HEK293T (cell line): ENCODE measurements at regions of chr17 and their contacts with region 1.

Region 1: GRCh38 chr17:68457539-68458259 is 403 bp upstream of the WIPI1 start:
- DNase-seq: peak; percentile 99

Region 2: DNA sequence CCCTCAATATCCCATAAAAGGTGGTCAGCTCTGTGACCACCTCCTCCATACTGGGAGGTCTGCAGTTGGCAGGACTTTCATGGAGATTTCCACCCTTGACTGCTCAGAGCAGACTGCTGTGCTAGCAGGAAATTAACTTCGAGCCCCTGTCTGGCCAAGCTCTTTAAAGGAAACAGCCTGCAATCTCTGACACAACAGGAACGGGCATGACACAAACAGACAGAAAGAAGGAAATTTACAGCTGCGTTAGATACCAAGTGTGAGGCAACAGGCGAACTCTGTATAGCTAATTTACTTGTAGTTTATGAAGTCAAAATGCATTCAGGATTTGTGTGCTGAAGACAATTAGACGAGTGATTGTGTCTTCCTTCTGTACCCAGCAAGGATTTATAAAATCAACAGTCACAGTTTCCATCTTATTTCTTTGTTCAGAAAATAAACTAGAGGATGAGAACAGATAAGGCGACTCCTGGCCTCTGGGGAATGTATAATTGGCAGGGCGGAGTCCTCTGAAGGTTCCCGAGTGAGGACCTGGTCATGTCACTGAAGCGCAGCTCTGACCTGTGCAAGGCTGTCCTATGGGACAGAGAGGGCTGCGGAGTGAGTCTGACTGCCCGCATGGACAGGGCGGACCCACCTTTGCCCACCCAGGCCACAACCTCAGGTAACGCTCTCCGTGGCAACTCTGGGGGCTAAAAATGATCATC is 16.5 kb before region 1 on chr17:
- CTCF ChIA-PET with region 1: interaction called, 4 read pairs
- POLR2A ChIA-PET with region 1: interaction called, 10 read pairs
- DNase-seq: no peak